ENCODE measurements at regions of chr12 and their contacts with region 1.

Region 1: GRCh38 chr12:110355073-110355472 is 48.4 kb downstream of the ANAPC7 start:
- DNase-seq: peak; percentile 55
- ATAC-seq: peak; percentile 90
- H3K4me3 ChIP-seq: no peak overlapping the region
- H3K27ac ChIP-seq: no peak overlapping the region
- H3K4me1 ChIP-seq: no peaks in the 10 kb centered on the region
- H3K27me3 ChIP-seq: no peaks in the 10 kb centered on the region
- CTCF ChIP-seq: peak; percentile 79
- EP300 ChIP-seq: no peak
- POLR2A ChIP-seq: no peak
- RAD21 ChIP-seq: no peak

Region 2: DNA sequence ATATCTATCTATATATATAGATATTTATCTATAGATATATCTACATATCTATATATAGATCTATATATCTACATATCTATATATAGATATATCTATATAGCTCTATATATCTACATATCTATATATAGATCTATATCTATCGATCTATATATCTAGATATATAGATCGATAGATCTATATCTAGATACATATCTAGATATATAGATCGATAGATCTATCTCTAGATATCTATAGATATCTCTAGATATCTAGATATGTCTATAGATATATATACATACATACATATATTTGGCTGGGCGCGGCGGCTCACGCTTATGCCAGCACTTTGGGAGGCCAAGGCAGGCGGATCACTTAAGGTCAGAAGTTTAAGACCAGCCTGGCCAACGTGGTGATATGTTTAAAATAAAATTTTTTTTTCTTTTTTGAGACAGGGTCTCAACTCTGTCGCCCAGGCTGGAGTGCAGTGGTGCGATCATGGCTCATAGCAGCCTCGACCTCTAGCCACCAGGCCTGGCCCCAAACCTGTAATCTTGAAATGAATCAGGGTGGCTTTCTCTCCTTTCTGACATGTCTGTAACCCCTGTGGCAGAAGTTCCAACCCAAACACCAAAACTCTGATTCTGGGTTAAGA is 77.0 kb after region 1 on chr12:
- CTCF ChIA-PET with region 1: interaction called, 7 read pairs
- POLR2A ChIA-PET with region 1: no interaction called
- in situ Hi-C with region 1: no loop called
- intact Hi-C with region 1: loop called (anchors 5 kb)
- DNase-seq: no peak
- ATAC-seq: no peak
- H3K4me3 ChIP-seq: peak overlapping the region in 2 of 3 experiments; percentile 57 to 59; a peak in 2 of 6 replicates
- H3K27ac ChIP-seq: no peak overlapping the region
- H3K4me1 ChIP-seq: no peaks in the 10 kb centered on the region
- H3K27me3 ChIP-seq: no peaks in the 10 kb centered on the region
- CTCF ChIP-seq: no peak
- EP300 ChIP-seq: no peak
- POLR2A ChIP-seq: no peak
- RAD21 ChIP-seq: no peak

Measured in HepG2 (cell line).